Activated CD4-positive, alpha-beta T cell treated with anti-CD3 and anti-CD28 coated beads, Interleukin-2, amount 10 ng/mL, durations not matched to agents 7 days and 5 days (primary cell): ENCODE measurements at regions of chr16 and their contacts with region 1.

Region 1: DNA sequence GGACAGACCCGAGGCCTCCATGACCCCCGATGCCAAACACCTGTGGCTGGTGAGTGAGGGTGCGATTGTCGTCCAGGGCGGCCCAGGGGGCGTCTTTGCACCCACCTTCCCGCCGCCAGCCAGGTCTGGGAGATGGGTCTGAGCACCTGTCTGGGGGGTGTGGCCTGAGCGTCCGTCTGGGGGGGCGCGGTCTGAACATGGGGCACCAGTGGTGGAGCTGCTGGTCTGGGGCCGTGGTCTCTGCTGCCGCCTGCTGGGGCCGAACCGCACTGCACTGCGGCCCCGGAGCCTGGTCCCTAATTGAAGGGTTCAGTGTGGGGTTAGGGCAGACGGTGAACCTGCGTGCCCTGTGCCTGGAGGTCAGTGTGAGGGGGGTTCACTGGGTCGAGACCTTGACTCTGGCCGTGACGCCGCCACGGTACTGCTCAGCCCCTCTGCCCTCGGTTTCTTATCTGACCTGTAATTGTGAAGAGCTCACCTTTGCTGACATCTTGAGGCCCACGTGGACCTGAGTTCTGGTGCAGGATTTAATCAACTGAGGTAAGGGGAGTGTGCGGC is 12.6 kb upstream of the TCF25 start:
- DNase-seq: peak; percentile 75
- H3K4me3 Mint-ChIP-seq: no peak overlapping the region
- H3K27ac Mint-ChIP-seq: no peak overlapping the region
- H3K4me1 Mint-ChIP-seq: peaks cover 39% of the 10 kb centered on the region
- H3K27me3 Mint-ChIP-seq: no peaks in the 10 kb centered on the region

Region 2: DNA sequence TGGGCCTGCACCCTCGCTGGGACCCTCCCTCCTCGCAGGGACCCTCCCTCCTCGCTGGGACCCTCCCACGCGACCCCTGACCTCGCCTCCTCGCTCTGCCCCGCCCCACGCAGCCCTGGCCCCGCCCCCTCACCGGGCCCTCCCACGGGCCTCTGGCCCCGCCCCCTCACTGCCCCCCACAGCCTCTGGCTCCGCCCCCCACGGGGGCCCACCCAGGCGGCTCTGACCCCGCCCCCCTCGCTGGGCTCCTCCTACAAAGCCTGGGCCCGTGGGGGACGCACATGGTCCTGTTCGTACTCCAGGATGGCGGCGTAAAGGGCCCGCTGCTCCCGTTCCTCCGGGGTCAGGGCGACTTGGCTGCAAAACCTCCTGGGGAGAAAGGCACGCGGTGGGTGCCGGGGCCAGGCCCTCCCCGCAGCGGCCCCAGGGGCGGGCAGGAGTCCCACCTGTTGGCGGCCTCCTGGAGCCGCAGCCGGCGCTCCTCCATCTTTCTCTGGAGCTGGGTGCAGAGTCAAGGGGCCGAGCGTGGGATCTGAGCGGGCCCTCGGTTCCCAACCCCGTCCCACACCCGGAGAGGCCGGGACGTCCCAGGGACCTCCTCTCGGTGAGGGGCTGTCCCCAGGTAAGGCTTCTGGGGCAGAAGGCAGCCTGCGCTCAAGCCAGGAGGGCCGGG is 149.1 kb before region 1 on chr16:
- CTCF ChIA-PET with region 1: interaction called, 46 read pairs
- POLR2A ChIA-PET with region 1: no interaction called
- DNase-seq: peak; percentile 76
- H3K4me3 Mint-ChIP-seq: peak overlapping the region; percentile 64
- H3K27ac Mint-ChIP-seq: no peak overlapping the region
- H3K4me1 Mint-ChIP-seq: peaks cover 9% of the 10 kb centered on the region
- H3K27me3 Mint-ChIP-seq: no peaks in the 10 kb centered on the region

Region 3: DNA sequence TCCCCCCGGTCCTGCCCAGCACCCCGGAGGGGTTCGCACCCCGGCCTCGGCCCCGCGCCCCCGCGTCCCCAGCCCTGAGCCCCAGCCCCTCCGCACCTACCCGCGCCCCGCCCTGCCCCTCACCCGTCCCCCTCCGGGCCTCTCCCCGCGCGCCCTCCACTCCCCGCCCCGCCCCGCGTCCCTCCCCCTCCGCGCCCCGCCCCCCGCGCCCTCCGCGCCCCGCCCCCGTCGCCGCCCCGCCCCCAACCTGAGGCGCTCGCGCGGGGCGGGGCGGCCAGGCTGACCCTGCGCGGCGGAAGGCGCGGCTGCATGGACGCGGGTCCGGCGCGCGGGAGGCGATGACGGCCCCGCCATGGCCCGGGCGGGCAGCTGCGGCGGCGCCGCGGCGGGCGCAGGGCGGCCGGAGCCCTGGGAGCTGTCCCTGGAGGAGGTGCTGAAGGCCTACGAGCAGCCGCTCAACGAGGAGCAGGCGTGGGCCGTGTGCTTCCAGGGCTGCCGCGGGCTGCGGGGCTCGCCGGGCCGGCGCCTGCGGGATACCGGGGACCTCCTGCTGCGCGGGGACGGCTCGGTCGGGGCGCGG is 32.5 kb before region 1 on chr16 and contains the start of gene SPIRE2:
- CTCF ChIA-PET with region 1: interaction called, 10 read pairs
- POLR2A ChIA-PET with region 1: no interaction called
- DNase-seq: peak; percentile 75
- H3K4me3 Mint-ChIP-seq: peak within 1 kb of the TSS; percentile 60
- H3K27ac Mint-ChIP-seq: no peak within 1 kb of the TSS
- H3K4me1 Mint-ChIP-seq: peaks cover 6% of the 10 kb centered on the region
- H3K27me3 Mint-ChIP-seq: peaks cover 20% of the 10 kb centered on the region
- total RNA-seq, gene SPIRE2: 1.1 to 1.8 TPM

Region 4: GRCh38 chr16:89873972-89874689 is 13.3 kb after region 1 on chr16:
- CTCF ChIA-PET with region 1: interaction called, 10 read pairs
- POLR2A ChIA-PET with region 1: interaction called, 3 read pairs
- DNase-seq: peak; percentile 92
- H3K4me3 Mint-ChIP-seq: peak overlapping the region; percentile 90
- H3K27ac Mint-ChIP-seq: peak overlapping the region; percentile 98
- H3K4me1 Mint-ChIP-seq: peaks cover 17% of the 10 kb centered on the region
- H3K27me3 Mint-ChIP-seq: no peaks in the 10 kb centered on the region

Region 5: DNA sequence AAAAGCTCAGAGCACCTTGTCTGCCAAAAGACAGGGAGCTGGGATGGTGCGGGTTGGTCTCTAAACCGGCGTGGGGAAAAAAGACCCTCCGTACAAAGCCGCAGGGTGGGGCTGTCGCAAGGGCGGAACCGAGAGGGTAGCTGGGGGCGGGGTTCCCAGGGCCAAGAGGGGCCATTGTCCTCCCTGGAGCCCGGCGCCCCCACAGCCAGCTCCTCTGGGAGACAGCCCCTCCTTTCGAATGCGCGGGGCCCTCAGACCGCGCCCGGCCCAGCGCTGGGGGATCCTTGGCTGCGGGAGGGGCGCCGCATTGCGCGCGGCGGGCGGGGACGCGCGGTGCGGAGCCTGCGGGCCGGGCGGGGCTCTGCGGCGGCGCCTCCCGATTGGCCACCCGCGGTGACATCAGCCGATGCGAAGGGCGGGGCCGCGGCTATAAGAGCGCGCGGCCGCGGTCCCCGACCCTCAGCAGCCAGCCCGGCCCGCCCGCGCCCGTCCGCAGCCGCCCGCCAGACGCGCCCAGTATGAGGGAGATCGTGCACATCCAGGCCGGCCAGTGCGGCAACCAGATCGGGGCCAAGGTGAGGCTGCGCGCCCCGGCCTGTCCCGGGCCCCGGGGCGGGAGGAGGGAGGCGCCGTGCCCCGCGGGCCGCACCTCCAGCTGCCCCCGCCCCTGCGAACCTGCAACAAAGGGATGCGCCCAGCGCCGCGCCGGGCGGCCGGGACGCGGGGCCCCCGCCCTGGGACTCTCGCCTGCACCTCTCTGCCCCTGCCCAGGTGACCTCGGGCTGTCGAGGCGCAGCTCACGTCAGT is 62.3 kb after region 1 on chr16 and contains the start of gene TUBB3:
- CTCF ChIA-PET with region 1: interaction called, 10 read pairs
- POLR2A ChIA-PET with region 1: no interaction called
- DNase-seq: peak; percentile 58
- H3K4me3 Mint-ChIP-seq: peak within 1 kb of the TSS; percentile 63
- H3K27ac Mint-ChIP-seq: no peak within 1 kb of the TSS
- H3K4me1 Mint-ChIP-seq: peaks cover 53% of the 10 kb centered on the region
- H3K27me3 Mint-ChIP-seq: peaks cover 52% of the 10 kb centered on the region
- total RNA-seq, gene TUBB3: 1.1 to 1.6 TPM